Heart left ventricle (tissue), 16 donors: ENCODE measurements at regions of chr17 and their contacts with region 1.

Region 1: GRCh38 chr17:68462381-68463210 is 5.3 kb upstream of the WIPI1 start:
- DNase-seq: peak; percentile 62 to 87 (median 72)
- ATAC-seq: peak; percentile 63 to 80 (median 78)
- H3K4me3 ChIP-seq: peak overlapping the region in 2 of 12 donors; percentile 15
- H3K27ac ChIP-seq: peak overlapping the region; percentile 59 to 96 (median 80)
- H3K4me1 ChIP-seq: peaks cover 0 to 57% (median 28%) of the 10 kb centered on the region in 12 donors
- H3K27me3 ChIP-seq: no peaks in the 10 kb centered on the region
- CTCF ChIP-seq: peak; percentile 56 to 84 (median 75)
- POLR2A ChIP-seq: no peak

Region 2: DNA sequence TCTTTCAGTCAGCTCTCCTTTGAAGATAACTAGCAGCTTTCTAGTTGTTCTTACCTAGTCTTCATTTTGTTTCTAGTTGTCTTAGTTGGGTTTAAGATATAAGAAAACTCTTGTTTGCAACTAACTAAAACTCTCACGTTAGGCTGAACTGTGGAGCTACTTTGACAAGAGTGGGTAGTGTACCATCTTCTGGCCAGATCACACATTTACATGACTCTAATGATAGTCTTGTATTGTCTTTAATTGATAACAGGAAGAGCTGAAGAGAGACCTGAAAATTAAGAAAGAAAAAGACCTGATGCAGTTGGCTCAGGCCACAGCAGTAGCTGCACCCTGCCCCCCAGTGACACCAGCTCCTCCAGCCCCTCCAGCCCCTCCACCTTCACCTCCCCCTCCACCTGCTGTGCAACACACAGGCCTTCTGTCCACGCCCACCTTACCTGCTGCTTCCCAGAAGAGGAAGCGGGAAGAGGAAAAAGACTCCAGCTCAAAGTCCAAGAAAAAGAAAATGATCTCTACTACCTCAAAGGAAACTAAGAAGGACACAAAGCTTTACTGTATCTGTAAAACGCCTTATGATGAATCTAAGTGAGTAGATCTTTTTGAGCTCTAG is 503.2 kb before region 1 on chr17:
- intact Hi-C with region 1: loop called in 3 of 10 experiments (anchors 5 to 10 kb)
- DNase-seq: no peak
- ATAC-seq: no peak
- H3K4me3 ChIP-seq: no peak overlapping the region
- H3K27ac ChIP-seq: peak overlapping the region in 2 of 12 donors; percentile 2 to 16
- H3K4me1 ChIP-seq: peaks cover 0 to 6% (median 0%) of the 10 kb centered on the region in 12 donors
- H3K27me3 ChIP-seq: no peaks in the 10 kb centered on the region
- CTCF ChIP-seq: no peak
- POLR2A ChIP-seq: no peak

Region 3: DNA sequence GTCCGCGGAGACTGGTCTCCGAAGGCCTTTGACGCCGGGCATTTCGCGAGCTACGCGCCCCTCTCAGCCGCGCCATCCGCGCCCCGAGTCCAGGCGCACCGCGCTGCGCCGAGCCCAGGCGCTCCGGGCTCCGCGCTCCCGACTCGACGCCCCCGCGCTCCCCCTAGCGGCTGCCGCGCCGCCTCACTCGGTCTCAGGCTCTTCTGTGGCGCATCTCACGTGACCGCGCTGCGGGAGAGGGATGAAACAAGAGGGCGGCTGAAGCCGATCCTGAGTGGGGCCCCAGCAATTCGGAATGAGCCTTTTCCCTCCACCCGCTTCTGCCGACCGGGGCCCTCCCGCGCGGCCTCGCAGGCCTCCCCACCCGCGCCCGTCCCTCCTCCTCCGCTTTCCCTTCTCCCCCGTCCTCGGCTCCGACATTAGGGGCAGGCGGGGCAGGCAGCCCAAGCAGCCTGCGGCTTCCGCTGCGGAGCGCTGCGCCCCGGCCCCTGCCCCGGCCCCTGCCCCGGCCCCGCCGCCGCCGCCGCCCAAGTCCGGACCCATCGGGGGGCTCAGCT is 257.3 kb before region 1 on chr17:
- intact Hi-C with region 1: loop called in 1 of 10 experiments (anchors 10 kb)
- DNase-seq: peak; percentile 91 to 97 (median 94)
- ATAC-seq: peak; percentile 80 to 96 (median 92)
- H3K4me3 ChIP-seq: peak overlapping the region; percentile 45 to 90 (median 78)
- H3K27ac ChIP-seq: peak overlapping the region; percentile 74 to 92 (median 86)
- H3K4me1 ChIP-seq: peaks cover 0 to 29% (median 12%) of the 10 kb centered on the region in 12 donors
- H3K27me3 ChIP-seq: peaks cover 0 to 4% (median 0%) of the 10 kb centered on the region in 9 donors
- CTCF ChIP-seq: peak; percentile 84 to 99 (median 92)
- POLR2A ChIP-seq: peak in 1 of 2 donors; percentile 71

Region 4: DNA sequence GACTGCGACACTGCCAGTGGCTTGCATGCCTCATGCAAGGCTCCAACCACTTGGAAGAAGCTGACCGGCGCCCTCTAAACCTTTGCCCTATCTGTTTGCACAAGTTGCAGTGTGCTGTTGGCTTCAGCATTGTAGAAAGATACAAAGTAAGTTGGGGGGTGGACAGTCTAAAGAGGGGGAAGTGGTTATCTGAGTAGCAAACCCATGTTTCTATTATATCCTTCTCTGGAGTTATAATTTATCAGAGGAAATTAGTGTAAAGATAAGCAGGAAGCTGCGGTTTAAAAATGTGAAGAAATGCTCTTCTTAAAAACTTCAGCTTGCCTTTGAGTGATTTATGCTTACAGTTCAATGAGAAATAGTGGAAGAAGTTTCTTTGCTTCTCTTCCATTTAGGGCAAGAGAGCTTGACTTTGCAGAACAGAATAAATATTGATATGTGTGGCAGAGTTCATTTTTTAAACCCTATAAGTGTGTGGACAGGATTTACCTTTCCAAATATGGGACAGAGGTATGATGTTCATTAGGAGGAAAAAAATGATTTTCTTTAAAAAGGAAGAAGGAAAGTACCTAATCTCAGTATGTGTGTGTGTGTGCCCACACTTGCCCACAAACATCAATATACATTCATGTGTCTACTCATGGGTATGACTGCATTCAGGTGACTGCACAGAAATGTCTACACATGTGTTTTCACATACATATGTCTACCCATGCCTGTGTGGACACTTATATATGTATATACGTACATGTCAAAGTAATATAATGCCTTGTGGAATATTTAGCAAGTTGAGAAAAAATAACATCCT is 206.7 kb before region 1 on chr17:
- intact Hi-C with region 1: loop called in 5 of 10 experiments (anchors 5 to 10 kb)
- DNase-seq: no peak
- ATAC-seq: no peak
- H3K4me3 ChIP-seq: no peak overlapping the region
- H3K27ac ChIP-seq: peak overlapping the region in 1 of 12 donors; percentile 64
- H3K4me1 ChIP-seq: peaks cover 0 to 51% (median 10%) of the 10 kb centered on the region in 12 donors
- H3K27me3 ChIP-seq: no peaks in the 10 kb centered on the region
- CTCF ChIP-seq: no peak
- POLR2A ChIP-seq: no peak

Region 5: GRCh38 chr17:68417317-68417716 is 45.3 kb before region 1 on chr17:
- intact Hi-C with region 1: no loop called
- DNase-seq: no peak
- ATAC-seq: no peak
- H3K4me3 ChIP-seq: no peak overlapping the region
- H3K27ac ChIP-seq: no peak overlapping the region
- H3K4me1 ChIP-seq: peaks cover 0 to 14% (median 0%) of the 10 kb centered on the region in 12 donors
- H3K27me3 ChIP-seq: no peaks in the 10 kb centered on the region
- CTCF ChIP-seq: no peak
- POLR2A ChIP-seq: no peak

Region 6: DNA sequence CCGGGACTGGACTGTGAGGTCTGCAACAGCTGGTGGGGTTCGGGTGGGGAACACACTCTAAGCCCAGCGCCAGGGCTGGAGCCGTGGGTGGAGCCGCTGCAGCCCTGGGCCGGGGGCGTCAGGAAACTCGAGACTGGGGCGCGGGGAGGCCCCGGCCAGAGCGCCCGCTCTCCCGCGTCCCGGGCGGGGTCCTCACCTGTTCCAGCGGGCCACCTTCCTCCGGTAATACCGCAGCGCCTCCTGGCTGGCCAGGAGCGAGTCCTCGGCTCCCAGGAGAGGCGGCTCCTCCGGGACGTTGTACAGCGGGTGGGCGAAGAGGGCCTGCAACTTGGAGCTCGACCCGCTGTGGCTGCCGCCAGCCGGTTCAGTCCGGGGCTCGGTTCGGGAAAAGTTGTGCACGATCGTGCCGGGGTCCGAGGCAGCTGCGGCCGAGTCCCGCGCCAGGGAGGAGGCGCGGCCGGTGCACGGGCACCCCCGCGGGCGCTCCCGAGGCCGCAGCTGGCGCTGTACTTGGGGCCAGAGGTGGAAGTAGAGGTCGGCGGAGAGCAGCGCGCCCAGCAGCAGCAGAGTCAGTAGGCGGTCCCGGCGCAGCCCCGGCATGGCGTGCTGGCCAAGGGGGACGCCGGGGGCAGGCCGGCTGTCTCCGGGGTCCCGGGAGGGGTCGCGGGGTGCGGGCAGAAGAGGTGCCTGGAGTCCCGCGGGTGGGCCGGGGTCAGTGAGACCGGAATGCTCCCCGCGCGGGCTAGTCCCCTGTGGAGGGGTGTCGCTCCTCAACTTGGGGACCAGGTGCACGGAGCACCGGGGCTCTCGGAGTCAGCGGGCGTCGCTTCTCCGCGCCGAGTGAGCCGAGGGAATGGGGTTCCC is 137.7 kb after region 1 on chr17:
- intact Hi-C with region 1: loop called in 4 of 10 experiments (anchors 2 to 10 kb)
- DNase-seq: peak; percentile 39 to 84 (median 68)
- ATAC-seq: peak in 3 of 4 donors; percentile 45 to 73 (median 72)
- H3K4me3 ChIP-seq: peak overlapping the region; percentile 64 to 97 (median 76)
- H3K27ac ChIP-seq: peak overlapping the region; percentile 72 to 98 (median 76)
- H3K4me1 ChIP-seq: peaks cover 0 to 55% (median 17%) of the 10 kb centered on the region in 12 donors
- H3K27me3 ChIP-seq: peaks cover 0 to 15% (median 0%) of the 10 kb centered on the region in 9 donors
- CTCF ChIP-seq: peak in 9 of 12 donors; percentile 12 to 53 (median 34)
- POLR2A ChIP-seq: no peak